ENCODE measurements at regions of chr9 and their contacts with region 1.

Region 1: GRCh38 chr9:3516667-3517330 is 9.0 kb downstream of the RFX3 start:
- DNase-seq: no peak
- ATAC-seq: peak; percentile 5; the same call in 2 of the 3 replicates
- H3K4me3 ChIP-seq: no peak overlapping the region
- H3K27ac ChIP-seq: no peak overlapping the region
- H3K4me1 ChIP-seq: peaks cover under 1% of the 10 kb centered on the region; the same call in 1 of the 2 replicates
- H3K27me3 ChIP-seq: no peaks in the 10 kb centered on the region
- CTCF ChIP-seq: no peak
- EP300 ChIP-seq: no peak
- POLR2A ChIP-seq: no peak
- RAD21 ChIP-seq: no peak

Region 2: GRCh38 chr9:3240656-3241268 is 276.0 kb before region 1 on chr9:
- CTCF ChIA-PET with region 1: interaction called, 3 read pairs
- POLR2A ChIA-PET with region 1: interaction called, 6 read pairs
- RAD21 ChIA-PET with region 1: interaction called, 4 read pairs
- SMC1A ChIA-PET with region 1: interaction called, 3 read pairs
- in situ Hi-C with region 1: no loop called
- intact Hi-C with region 1: loop called (anchors 5 kb)
- DNase-seq: peak; percentile 35
- ATAC-seq: peak; percentile 97
- H3K4me3 ChIP-seq: no peak overlapping the region
- H3K27ac ChIP-seq: no peak overlapping the region
- H3K4me1 ChIP-seq: peaks cover 10% of the 10 kb centered on the region; the same call in 1 of the 2 replicates
- H3K27me3 ChIP-seq: no peaks in the 10 kb centered on the region
- CTCF ChIP-seq: peak; percentile 81 to 93 (median 86); a peak in 5 of 6 replicates
- EP300 ChIP-seq: no peak
- POLR2A ChIP-seq: no peak
- RAD21 ChIP-seq: peak; percentile 89

Region 3: GRCh38 chr9:3473405-3473804 is 43.4 kb before region 1 on chr9:
- CTCF ChIA-PET with region 1: interaction called, 14 read pairs
- POLR2A ChIA-PET with region 1: interaction called, 5 read pairs
- RAD21 ChIA-PET with region 1: interaction called, 180 read pairs
- SMC1A ChIA-PET with region 1: interaction called, 43 read pairs
- in situ Hi-C with region 1: loop called (anchors 5 kb)
- intact Hi-C with region 1: no loop called
- DNase-seq: no peak
- ATAC-seq: peak; percentile 64
- H3K4me3 ChIP-seq: no peak overlapping the region
- H3K27ac ChIP-seq: peak overlapping the region; percentile 40
- H3K4me1 ChIP-seq: peaks cover 37% of the 10 kb centered on the region
- H3K27me3 ChIP-seq: no peaks in the 10 kb centered on the region
- CTCF ChIP-seq: peak in 1 of 3 experiments; percentile 32; a peak in 1 of 6 replicates
- EP300 ChIP-seq: no peak
- POLR2A ChIP-seq: no peak
- RAD21 ChIP-seq: peak; percentile 33; the same call in 1 of the 2 replicates

Region 4: DNA sequence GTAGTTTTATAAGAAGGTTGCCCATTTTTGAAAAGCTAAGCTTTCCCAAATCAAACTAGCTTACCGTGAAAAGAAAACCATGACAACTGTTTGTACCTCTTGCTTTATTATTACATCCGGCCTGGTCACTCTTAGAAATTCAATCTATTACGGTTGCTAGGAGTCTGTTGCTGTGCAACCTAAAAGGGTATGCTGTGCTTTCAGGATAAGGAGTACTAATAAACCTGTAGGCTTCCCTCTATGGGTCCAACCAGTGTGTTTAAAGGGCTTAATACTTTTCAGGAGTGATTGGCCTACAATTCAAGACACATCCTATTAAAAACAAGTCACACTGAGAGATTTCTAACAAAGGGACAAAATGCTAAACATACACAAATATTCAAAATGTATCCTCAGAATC is 18.1 kb before region 1 on chr9:
- CTCF ChIA-PET with region 1: interaction called, 5 read pairs
- POLR2A ChIA-PET with region 1: interaction called, 4 read pairs
- RAD21 ChIA-PET with region 1: interaction called, 3 read pairs
- SMC1A ChIA-PET with region 1: interaction called, 11 read pairs
- in situ Hi-C with region 1: no loop called
- intact Hi-C with region 1: no loop called
- DNase-seq: no peak
- ATAC-seq: peak; percentile 53
- H3K4me3 ChIP-seq: no peak overlapping the region
- H3K27ac ChIP-seq: no peak overlapping the region
- H3K4me1 ChIP-seq: peaks cover 2% of the 10 kb centered on the region; the same call in 1 of the 2 replicates
- H3K27me3 ChIP-seq: no peaks in the 10 kb centered on the region
- CTCF ChIP-seq: no peak
- EP300 ChIP-seq: no peak
- POLR2A ChIP-seq: no peak
- RAD21 ChIP-seq: no peak

Measured in GM12878 (cell line).